GM12878 (cell line): ENCODE measurements at regions of chr10 and their contacts with region 1.

Region 1: DNA sequence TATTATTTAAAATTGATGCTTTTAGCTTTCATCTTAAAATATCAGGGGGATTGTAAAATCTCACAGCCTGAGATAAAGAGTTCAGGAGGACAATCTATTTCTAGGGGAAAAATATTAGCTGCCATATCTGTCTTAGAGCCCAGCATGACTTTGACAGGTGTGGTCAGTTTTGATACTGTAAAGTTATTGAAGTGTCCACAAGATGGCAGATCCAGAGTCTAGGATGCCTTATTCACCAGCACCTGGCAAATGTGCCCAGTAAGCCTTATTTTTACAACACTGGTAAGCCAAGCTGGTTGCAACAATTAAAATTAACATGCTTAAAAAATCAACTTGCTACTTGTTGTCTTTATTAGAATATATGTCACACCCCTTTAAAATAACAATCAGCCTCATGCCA is 579.3 kb downstream of the SH2D4B start:
- DNase-seq: no peak
- ATAC-seq: peak; percentile 58
- H3K4me3 ChIP-seq: no peak overlapping the region
- H3K27ac ChIP-seq: no peak overlapping the region
- H3K4me1 ChIP-seq: no peaks in the 10 kb centered on the region
- H3K27me3 ChIP-seq: no peaks in the 10 kb centered on the region
- CTCF ChIP-seq: no peak
- EP300 ChIP-seq: no peak
- POLR2A ChIP-seq: no peak
- RAD21 ChIP-seq: no peak

Region 2: GRCh38 chr10:80649183-80649582 is 467.8 kb before region 1 on chr10:
- CTCF ChIA-PET with region 1: no interaction called
- POLR2A ChIA-PET with region 1: no interaction called
- RAD21 ChIA-PET with region 1: no interaction called
- SMC1A ChIA-PET with region 1: no interaction called
- in situ Hi-C with region 1: no loop called
- intact Hi-C with region 1: no loop called
- DNase-seq: no peak
- ATAC-seq: no peak
- H3K4me3 ChIP-seq: no peak overlapping the region
- H3K27ac ChIP-seq: no peak overlapping the region
- H3K4me1 ChIP-seq: no peaks in the 10 kb centered on the region
- H3K27me3 ChIP-seq: no peaks in the 10 kb centered on the region
- CTCF ChIP-seq: no peak
- EP300 ChIP-seq: no peak
- POLR2A ChIP-seq: no peak
- RAD21 ChIP-seq: no peak

Region 3: DNA sequence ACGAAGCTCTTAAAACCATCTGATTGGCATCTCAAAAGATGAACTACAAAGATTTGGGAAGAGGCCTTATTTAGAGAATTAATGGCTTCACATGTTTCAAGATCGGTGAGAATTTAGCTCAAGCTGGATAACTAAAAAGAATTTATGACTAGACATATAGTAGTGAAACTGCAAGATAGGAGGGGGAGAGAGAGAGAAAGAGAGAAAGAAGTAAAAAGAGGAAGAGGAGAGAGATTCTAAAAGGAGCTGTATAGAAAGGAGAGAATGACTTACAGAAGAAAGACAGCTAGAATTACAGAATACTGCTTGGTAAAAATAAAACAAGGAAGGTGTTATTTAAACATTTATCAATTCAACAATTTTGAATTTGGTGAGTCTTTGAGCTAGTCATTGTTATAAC is 13.0 kb after region 1 on chr10:
- CTCF ChIA-PET with region 1: interaction called, 5 read pairs
- POLR2A ChIA-PET with region 1: interaction called, 4 read pairs
- RAD21 ChIA-PET with region 1: no interaction called
- SMC1A ChIA-PET with region 1: interaction called, 18 read pairs
- in situ Hi-C with region 1: no loop called
- intact Hi-C with region 1: no loop called
- DNase-seq: no peak
- ATAC-seq: peak; percentile 46; the same call in 2 of the 3 replicates
- H3K4me3 ChIP-seq: no peak overlapping the region
- H3K27ac ChIP-seq: no peak overlapping the region
- H3K4me1 ChIP-seq: no peaks in the 10 kb centered on the region
- H3K27me3 ChIP-seq: no peaks in the 10 kb centered on the region
- CTCF ChIP-seq: no peak
- EP300 ChIP-seq: no peak
- POLR2A ChIP-seq: no peak
- RAD21 ChIP-seq: no peak

Region 4: GRCh38 chr10:81135851-81136250 is 18.9 kb after region 1 on chr10:
- CTCF ChIA-PET with region 1: no interaction called
- POLR2A ChIA-PET with region 1: interaction called, 4 read pairs
- RAD21 ChIA-PET with region 1: no interaction called
- SMC1A ChIA-PET with region 1: interaction called, 18 read pairs
- in situ Hi-C with region 1: no loop called
- intact Hi-C with region 1: no loop called
- DNase-seq: peak; percentile 46
- ATAC-seq: peak; percentile 93
- H3K4me3 ChIP-seq: no peak overlapping the region
- H3K27ac ChIP-seq: no peak overlapping the region
- H3K4me1 ChIP-seq: peaks cover 9% of the 10 kb centered on the region
- H3K27me3 ChIP-seq: no peaks in the 10 kb centered on the region
- CTCF ChIP-seq: peak in 1 of 3 experiments; percentile 3; a peak in 1 of 6 replicates
- EP300 ChIP-seq: peak; percentile 63 to 70; a peak in 3 of 4 replicates
- POLR2A ChIP-seq: no peak
- RAD21 ChIP-seq: no peak